ENCODE measurements at regions of chr11 and their contacts with region 1.

Region 1: DNA sequence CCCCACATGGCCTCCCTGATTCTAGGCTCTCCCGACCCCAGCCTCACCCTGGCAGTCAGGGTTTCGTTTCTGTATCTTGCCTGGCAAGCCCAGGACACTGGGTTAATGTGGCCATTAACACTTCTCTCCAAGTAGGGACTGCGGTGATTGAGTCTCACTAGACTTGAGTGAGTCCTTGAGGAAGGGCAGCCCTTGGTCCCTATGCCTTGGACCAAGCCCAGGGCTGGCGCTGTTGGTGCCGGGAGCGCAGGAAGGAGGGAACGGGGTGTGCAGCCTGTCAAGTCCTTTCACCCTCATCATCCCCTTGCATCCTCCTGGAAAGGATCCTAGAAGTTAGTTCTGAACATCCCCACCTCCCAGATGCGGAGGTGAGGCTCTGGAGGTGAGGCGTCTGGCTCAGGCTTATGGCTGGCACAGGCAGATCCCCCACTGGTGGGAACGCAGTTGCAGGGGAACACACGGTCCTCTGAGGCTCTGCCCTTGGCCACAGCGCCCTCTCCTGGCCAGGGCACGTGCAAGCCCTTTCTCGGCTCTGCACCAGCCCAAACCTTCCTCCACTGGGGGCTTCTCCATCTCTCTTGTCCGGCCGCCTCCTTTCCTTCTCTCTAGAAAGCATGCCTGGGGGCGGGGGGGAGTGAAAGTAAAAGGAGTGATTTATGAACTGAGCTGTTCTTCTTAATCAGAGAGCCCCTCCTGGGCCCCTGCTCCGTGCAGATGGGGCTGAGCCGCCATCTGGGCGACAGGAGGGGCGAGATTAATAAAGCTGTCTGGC is 56.7 kb downstream of the TP53I11 start:
- DNase-seq: peak; percentile 84
- ATAC-seq: peak; percentile 94

Region 2: GRCh38 chr11:44727373-44728287 is 166.4 kb before region 1 on chr11:
- intact Hi-C with region 1: loop called (anchors 5 kb)
- DNase-seq: peak; percentile 90
- ATAC-seq: peak; percentile 93

Measured in sciatic nerve (tissue), 2 donors.